Activated CD4-positive, alpha-beta T cell treated with anti-CD3 and anti-CD28 coated beads, Interleukin-2, amount 10 ng/mL, durations not matched to agents 24 days and 14 days (primary cell): ENCODE measurements at regions of chr9 and their contacts with region 1.

Region 1: GRCh38 chr9:9942764-9943424 is 669.9 kb downstream of the PTPRD start:
- DNase-seq: peak; percentile 82
- H3K4me3 Mint-ChIP-seq: no peak overlapping the region
- H3K27ac Mint-ChIP-seq: no peak overlapping the region
- H3K4me1 Mint-ChIP-seq: no peaks in the 10 kb centered on the region
- H3K27me3 Mint-ChIP-seq: no peaks in the 10 kb centered on the region

Region 2: DNA sequence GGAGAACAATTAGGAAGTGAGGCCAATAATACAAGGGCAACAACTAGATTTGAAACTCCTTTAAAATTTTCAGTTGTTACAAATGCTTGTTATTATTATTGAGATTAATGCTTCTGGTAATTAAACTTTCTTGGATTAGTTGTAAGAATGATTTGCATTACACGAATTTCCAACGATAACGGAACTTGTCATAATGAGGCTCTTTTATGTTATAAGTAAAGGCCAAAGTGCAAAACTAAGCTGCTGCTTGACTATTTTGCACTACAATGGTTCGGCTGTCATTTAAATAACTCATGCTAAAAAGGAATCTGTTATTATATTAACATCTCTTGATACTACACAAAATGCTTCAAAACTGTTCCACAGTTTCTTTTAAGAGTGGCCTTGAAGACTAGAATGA is 337.2 kb before region 1 on chr9:
- intact Hi-C with region 1: loop called (anchors 5 kb)
- DNase-seq: no peak
- H3K4me3 Mint-ChIP-seq: no peak overlapping the region
- H3K27ac Mint-ChIP-seq: no peak overlapping the region
- H3K4me1 Mint-ChIP-seq: no peaks in the 10 kb centered on the region
- H3K27me3 Mint-ChIP-seq: no peaks in the 10 kb centered on the region